Esophagus muscularis mucosa (tissue), 4 donors: ENCODE measurements at regions of chr12 and their contacts with region 1.

Region 1: GRCh38 chr12:109951751-109952150 is 44.4 kb downstream of the GIT2 start:
- DNase-seq: no peak
- H3K4me3 ChIP-seq: no peak overlapping the region
- H3K27ac ChIP-seq: peak overlapping the region; percentile 71 to 81 (median 73)
- H3K4me1 ChIP-seq: peaks cover 45 to 63% (median 62%) of the 10 kb centered on the region in 4 donors
- H3K27me3 ChIP-seq: no peaks in the 10 kb centered on the region
- CTCF ChIP-seq: no peak
- EP300 ChIP-seq: no peak
- POLR2A ChIP-seq: no peak

Region 2: DNA sequence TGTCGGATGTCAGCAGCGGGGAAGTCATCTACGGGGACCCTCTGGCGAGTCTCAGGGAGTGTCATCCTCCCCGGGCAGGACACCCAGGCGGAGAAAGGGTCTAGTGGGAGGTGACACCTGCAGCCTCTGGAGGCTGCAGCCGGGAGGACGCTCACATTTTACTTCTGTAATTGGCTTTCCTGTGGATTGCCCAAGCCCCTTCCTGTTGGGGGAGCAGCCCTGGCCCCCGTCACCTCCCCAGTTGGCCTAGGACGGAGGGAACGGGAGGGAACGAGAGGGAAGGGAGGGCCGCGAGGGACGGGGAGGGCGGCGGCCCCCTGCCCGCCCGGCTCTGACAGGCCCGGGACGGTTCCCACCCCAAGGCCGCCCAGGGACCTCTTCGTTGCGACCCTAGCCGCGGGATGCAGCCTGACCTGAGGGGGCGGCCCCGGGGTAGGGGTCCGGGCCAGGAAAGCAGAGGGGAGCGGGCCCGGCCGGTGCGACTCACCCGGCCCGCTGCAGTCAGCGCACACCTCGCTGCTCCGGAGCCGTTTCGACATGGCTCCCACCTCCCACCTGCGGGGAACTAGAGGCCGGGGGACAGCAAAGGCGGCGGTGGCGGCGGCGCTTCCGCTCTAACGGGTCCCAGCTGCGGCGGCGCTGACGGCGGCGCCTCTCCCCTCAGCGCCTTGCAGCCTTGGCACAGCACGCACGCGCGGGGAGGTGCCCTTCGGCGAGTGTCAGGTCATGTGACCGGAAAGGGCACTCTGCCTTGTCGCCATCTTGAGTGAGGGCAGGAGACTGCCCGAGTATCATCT is 44.1 kb after region 1 on chr12 and contains the start of gene GIT2:
- intact Hi-C with region 1: loop called (anchors 5 kb)
- DNase-seq: peak; percentile 98
- H3K4me3 ChIP-seq: peak within 1 kb of the TSS; percentile 79 to 99 (median 94)
- H3K27ac ChIP-seq: peak within 1 kb of the TSS; percentile 81 to 89 (median 84)
- H3K4me1 ChIP-seq: peaks cover 38 to 59% (median 57%) of the 10 kb centered on the region in 4 donors
- H3K27me3 ChIP-seq: no peaks in the 10 kb centered on the region
- CTCF ChIP-seq: peak in 1 of 3 experiments; percentile 24
- EP300 ChIP-seq: no peak
- POLR2A ChIP-seq: peak; percentile 73
- total RNA-seq, gene GIT2: 28.7 to 46.5 (median 36.2) TPM